Dendritic cell treated with granulocyte-macrophage colony-stimulating factor and Interleukin-4, amounts not matched to agents 40 ng/mL and 50 ng/mL, for 4 days (primary cell): ENCODE measurements at regions of chr12 and their contacts with region 1.

Region 1: DNA sequence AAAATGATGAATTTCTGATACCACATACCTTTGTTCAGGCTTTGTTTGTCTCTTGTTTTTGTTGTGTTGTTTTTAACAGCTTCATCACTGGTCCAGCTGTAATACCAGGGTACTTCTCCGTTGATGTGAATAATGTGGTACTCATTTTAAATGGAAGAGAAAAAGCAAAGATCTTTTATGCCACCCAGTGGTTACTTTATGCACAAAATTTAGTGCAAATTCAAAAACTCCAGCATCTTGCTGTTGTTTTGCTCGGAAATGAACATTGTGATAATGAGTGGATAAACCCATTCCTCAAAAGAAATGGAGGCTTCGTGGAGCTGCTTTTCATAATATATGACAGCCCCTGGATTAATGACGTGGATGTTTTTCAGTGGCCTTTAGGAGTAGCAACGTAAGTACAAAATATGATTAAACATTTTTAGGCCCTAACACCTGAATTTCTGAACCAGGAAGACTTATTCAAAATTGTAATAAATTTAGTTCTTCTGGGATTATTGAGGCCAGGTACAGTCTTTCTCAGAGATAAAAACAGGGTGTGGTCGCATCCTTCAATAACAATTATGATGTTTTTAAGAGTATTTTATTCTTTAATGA is 22.4 kb downstream of the RXYLT1 start:
- H3K4me3 Mint-ChIP-seq: no peak overlapping the region
- H3K27ac Mint-ChIP-seq: no peak overlapping the region
- H3K4me1 Mint-ChIP-seq: no peaks in the 10 kb centered on the region
- H3K27me3 Mint-ChIP-seq: no peaks in the 10 kb centered on the region

Region 2: DNA sequence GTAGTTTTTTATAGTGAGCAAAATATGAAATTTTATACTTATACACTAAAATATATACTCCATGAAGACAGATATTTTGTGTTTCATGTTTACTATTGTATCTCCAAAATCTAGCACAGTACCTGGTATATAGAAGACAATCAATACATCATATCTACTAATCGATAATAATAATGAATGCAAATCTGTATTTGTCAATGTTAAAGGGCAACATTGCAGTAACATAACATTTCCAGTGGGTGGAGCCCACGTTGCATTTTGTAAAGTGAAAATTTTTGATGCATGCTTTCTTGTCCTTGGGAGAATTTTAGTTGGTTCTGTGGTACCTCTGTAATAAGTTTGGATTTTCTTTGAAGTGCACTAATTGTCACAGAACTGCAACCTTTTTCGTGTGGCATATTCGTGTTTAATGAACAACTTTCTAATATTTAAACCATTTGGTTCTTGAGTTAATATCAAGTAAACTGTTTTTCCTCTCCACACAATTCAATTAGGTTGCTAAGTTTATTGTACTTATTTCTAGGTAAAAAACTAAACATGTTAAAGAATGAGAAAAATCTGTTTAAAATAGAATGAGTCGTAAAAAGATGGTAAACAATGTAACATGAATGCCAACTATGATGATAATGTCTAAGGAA is 698.5 kb before region 1 on chr12:
- intact Hi-C with region 1: loop called (anchors 2 kb)
- H3K4me3 Mint-ChIP-seq: no peak overlapping the region
- H3K27ac Mint-ChIP-seq: no peak overlapping the region
- H3K4me1 Mint-ChIP-seq: no peaks in the 10 kb centered on the region
- H3K27me3 Mint-ChIP-seq: no peaks in the 10 kb centered on the region

Region 3: GRCh38 chr12:63416788-63417187 is 385.3 kb before region 1 on chr12:
- intact Hi-C with region 1: loop called (anchors 2 kb)
- H3K4me3 Mint-ChIP-seq: no peak overlapping the region
- H3K27ac Mint-ChIP-seq: no peak overlapping the region
- H3K4me1 Mint-ChIP-seq: no peaks in the 10 kb centered on the region
- H3K27me3 Mint-ChIP-seq: no peaks in the 10 kb centered on the region

Region 4: GRCh38 chr12:63668028-63668799 is 133.9 kb before region 1 on chr12 and contains the start of gene DPY19L2:
- intact Hi-C with region 1: loop called (anchors 5 kb)
- H3K4me3 Mint-ChIP-seq: peak within 1 kb of the TSS; percentile 84
- H3K27ac Mint-ChIP-seq: peak within 1 kb of the TSS; percentile 31
- H3K4me1 Mint-ChIP-seq: peaks cover 21% of the 10 kb centered on the region
- H3K27me3 Mint-ChIP-seq: peaks cover 28% of the 10 kb centered on the region

Region 5: GRCh38 chr12:63753744-63754143 is 48.4 kb before region 1 on chr12:
- intact Hi-C with region 1: no loop called
- H3K4me3 Mint-ChIP-seq: no peak overlapping the region
- H3K27ac Mint-ChIP-seq: no peak overlapping the region
- H3K4me1 Mint-ChIP-seq: peaks cover 5% of the 10 kb centered on the region
- H3K27me3 Mint-ChIP-seq: no peaks in the 10 kb centered on the region